Activated CD4-positive, alpha-beta memory T cell treated with anti-CD3 and anti-CD28 coated beads, Interleukin-2, amount 10 ng/mL, durations not matched to agents 7 days and 5 days (primary cell): ENCODE measurements at regions of chr19 and their contacts with region 1.

Region 1: DNA sequence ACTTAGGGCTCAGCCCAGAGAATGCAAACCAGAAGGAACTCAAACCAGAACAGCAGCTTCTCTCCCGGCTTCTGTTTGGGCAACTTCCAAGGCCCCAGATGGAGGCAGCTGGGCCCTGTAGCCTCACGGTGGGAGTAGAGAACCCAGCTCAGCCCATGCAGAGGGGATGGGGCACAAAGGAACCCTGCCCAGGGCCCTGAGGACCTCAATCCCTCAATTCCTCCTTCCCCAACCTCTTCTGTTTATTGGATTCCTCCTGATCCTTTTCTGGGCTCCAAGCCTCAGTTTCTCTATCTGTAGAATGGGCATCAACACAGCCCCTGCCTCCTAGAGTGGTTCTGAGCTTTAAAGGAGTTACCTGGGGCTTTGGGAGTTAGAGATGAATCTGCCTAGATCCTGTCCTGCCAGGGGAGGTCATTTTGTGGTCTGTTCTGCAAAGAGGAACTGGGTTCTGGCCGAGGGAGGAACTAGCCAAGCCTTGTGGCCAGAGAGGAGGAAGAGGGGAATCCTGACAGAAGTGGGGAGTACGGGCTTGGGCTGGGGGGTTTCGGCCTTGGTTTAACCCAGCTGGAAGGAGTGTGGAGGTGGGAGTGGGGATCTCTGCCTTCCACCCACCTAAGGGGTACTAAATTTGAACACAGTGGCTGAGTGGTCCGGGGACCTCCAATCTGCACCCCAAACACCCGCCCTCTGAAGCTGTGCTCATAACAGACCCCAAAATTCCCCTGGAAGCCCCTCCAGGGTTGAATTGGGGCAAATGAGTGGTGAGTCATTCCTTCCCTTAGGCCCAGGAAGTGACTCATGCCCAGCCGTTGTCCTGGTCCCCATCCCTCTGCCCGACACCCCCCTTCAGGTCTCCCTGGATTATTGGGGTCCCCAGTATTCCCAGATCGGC is 2.7 kb downstream of the ADGRE5 start:
- DNase-seq: peak; percentile 63
- H3K4me3 Mint-ChIP-seq: peak overlapping the region; percentile 92
- H3K27ac Mint-ChIP-seq: peak overlapping the region; percentile 90
- H3K4me1 Mint-ChIP-seq: peaks cover 38% of the 10 kb centered on the region
- H3K27me3 Mint-ChIP-seq: no peaks in the 10 kb centered on the region

Region 2: GRCh38 chr19:14300303-14300702 is 83.6 kb before region 1 on chr19:
- CTCF ChIA-PET with region 1: no interaction called
- POLR2A ChIA-PET with region 1: no interaction called
- DNase-seq: no peak
- H3K4me3 Mint-ChIP-seq: no peak overlapping the region
- H3K27ac Mint-ChIP-seq: no peak overlapping the region
- H3K4me1 Mint-ChIP-seq: no peaks in the 10 kb centered on the region
- H3K27me3 Mint-ChIP-seq: peaks cover 8% of the 10 kb centered on the region

Region 3: GRCh38 chr19:14354445-14354844 is 29.5 kb before region 1 on chr19:
- CTCF ChIA-PET with region 1: interaction called, 19 read pairs
- POLR2A ChIA-PET with region 1: interaction called, 78 read pairs
- DNase-seq: no peak
- H3K4me3 Mint-ChIP-seq: no peak overlapping the region
- H3K27ac Mint-ChIP-seq: no peak overlapping the region
- H3K4me1 Mint-ChIP-seq: peaks cover 38% of the 10 kb centered on the region
- H3K27me3 Mint-ChIP-seq: no peaks in the 10 kb centered on the region

Region 4: GRCh38 chr19:14395710-14396336 is 11.9 kb after region 1 on chr19:
- CTCF ChIA-PET with region 1: no interaction called
- POLR2A ChIA-PET with region 1: interaction called, 218 read pairs
- DNase-seq: no peak
- H3K4me3 Mint-ChIP-seq: no peak overlapping the region
- H3K27ac Mint-ChIP-seq: no peak overlapping the region
- H3K4me1 Mint-ChIP-seq: peaks cover 11% of the 10 kb centered on the region
- H3K27me3 Mint-ChIP-seq: no peaks in the 10 kb centered on the region

Region 5: GRCh38 chr19:14419106-14419813 is 35.4 kb after region 1 on chr19 and contains the start of gene DDX39A:
- CTCF ChIA-PET with region 1: no interaction called
- POLR2A ChIA-PET with region 1: interaction called, 218 read pairs
- DNase-seq: peak; percentile 99
- H3K4me3 Mint-ChIP-seq: peak within 1 kb of the TSS; percentile 88
- H3K27ac Mint-ChIP-seq: peak within 1 kb of the TSS; percentile 96
- H3K4me1 Mint-ChIP-seq: peaks cover 34% of the 10 kb centered on the region
- H3K27me3 Mint-ChIP-seq: no peaks in the 10 kb centered on the region
- total RNA-seq, gene DDX39A: 233 to 234 TPM

Region 6: GRCh38 chr19:14661372-14661924 is 277.5 kb after region 1 on chr19:
- CTCF ChIA-PET with region 1: no interaction called
- POLR2A ChIA-PET with region 1: no interaction called
- DNase-seq: no peak
- H3K4me3 Mint-ChIP-seq: no peak overlapping the region
- H3K27ac Mint-ChIP-seq: no peak overlapping the region
- H3K4me1 Mint-ChIP-seq: no peaks in the 10 kb centered on the region
- H3K27me3 Mint-ChIP-seq: peaks cover 5% of the 10 kb centered on the region

Region 7: DNA sequence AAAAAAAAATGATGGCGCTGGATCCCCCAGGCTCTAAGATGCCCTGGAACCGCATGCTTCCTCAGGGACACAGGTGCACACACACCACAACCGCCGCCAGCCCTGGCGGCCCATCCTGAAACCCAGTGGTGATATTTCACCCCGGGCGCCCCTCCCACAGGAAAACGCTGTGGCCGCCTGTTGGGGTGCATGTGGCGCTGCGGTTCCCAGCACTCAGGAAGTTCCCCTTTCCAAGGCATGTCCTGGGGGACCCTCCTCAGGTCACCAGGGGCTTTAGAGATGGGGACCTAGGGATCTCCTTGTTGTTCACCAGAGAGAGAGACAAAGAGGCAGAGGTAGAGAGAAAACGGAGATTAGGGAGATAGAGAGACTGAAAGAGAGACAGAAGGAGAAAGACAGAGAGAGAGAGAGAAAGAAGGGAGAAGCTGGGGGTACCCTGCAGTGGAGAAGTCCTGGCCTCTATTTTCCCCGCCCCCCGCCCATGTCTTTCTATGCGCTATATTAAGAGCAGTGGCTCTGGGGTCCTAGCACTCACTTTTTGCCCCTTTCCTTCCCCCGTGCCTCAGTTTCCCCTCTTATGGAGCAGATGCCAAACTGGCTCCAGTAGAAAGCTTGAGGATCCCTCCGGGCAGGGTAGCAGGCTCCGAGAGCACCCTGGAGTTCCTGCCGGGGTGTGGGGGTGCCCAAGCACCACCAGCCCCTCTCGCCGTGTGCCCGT is 392.1 kb after region 1 on chr19:
- CTCF ChIA-PET with region 1: no interaction called
- POLR2A ChIA-PET with region 1: interaction called, 15 read pairs
- DNase-seq: no peak
- H3K4me3 Mint-ChIP-seq: no peak overlapping the region
- H3K27ac Mint-ChIP-seq: no peak overlapping the region
- H3K4me1 Mint-ChIP-seq: peaks cover 10% of the 10 kb centered on the region
- H3K27me3 Mint-ChIP-seq: peaks cover 14% of the 10 kb centered on the region